Activated naive CD4-positive, alpha-beta T cell treated with anti-CD3 and anti-CD28 coated beads, Interleukin-2, amount 10 ng/mL, durations not matched to agents 7 days and 5 days (primary cell): ENCODE measurements at regions of chr4 and their contacts with region 1.

Region 1: GRCh38 chr4:39134683-39135319 is 47.5 kb upstream of the WDR19 start:
- DNase-seq: no peak
- H3K4me3 Mint-ChIP-seq: no peak overlapping the region
- H3K27ac Mint-ChIP-seq: no peak overlapping the region
- H3K4me1 Mint-ChIP-seq: peaks cover 16% of the 10 kb centered on the region
- H3K27me3 Mint-ChIP-seq: no peaks in the 10 kb centered on the region

Region 2: GRCh38 chr4:38894340-38894982 is 240.3 kb before region 1 on chr4:
- CTCF ChIA-PET with region 1: interaction called, 122 read pairs
- DNase-seq: no peak
- H3K4me3 Mint-ChIP-seq: no peak overlapping the region
- H3K27ac Mint-ChIP-seq: no peak overlapping the region
- H3K4me1 Mint-ChIP-seq: peaks cover 8% of the 10 kb centered on the region
- H3K27me3 Mint-ChIP-seq: peaks cover 7% of the 10 kb centered on the region

Region 3: DNA sequence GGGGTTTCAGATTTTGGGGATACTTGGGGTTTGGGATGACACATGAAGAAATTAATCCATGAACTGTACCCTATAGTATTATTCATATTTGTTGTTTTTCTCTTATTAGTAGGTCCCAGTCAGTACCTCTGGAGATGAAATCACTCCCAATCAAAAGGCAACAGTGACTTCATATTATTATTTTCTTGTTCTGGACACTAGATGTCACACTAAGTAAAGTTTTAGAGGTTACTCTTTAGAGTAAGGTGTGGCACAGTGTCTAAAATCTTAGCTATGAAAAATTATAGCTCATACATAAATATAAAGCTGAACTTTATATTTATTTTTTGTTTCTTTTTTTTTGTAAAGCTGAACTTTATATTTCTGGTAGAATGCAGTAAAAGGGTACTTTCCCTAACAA is 232.1 kb before region 1 on chr4:
- CTCF ChIA-PET with region 1: interaction called, 122 read pairs
- DNase-seq: no peak
- H3K4me3 Mint-ChIP-seq: no peak overlapping the region
- H3K27ac Mint-ChIP-seq: no peak overlapping the region
- H3K4me1 Mint-ChIP-seq: peaks cover 2% of the 10 kb centered on the region
- H3K27me3 Mint-ChIP-seq: peaks cover 15% of the 10 kb centered on the region

Region 4: DNA sequence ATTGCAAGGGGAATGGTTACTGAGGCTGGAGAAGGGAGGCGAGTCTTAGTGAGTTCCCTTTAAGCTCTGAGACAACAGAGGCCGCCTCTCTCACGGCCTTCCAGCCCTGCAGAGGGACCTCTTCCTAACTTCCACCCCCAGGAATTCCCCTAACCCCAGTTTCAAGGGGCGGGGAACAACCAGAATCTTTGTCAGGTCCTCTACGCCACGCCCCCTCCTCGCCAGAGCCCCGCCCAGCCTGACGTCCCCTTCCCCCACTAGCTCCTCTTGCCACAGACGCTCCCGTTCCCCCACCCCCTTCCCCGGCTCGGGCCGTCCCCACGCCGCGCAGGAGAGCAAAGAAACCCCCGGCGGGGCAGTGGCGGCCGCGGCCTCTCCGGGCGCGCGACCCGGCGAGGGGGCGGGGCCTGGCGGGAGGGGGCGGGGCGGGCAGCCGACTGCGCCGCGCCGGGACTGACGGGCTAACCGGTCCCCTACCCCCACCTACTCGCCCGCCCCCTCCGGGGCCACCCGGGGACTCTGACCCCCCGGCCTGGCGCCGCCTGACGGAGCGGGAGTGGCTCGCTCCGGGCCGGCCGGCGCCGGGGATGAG is 90.3 kb before region 1 on chr4:
- CTCF ChIA-PET with region 1: interaction called, 11 read pairs
- DNase-seq: peak; percentile 98
- H3K4me3 Mint-ChIP-seq: peak overlapping the region; percentile 86
- H3K27ac Mint-ChIP-seq: peak overlapping the region; percentile 91
- H3K4me1 Mint-ChIP-seq: peaks cover 56% of the 10 kb centered on the region
- H3K27me3 Mint-ChIP-seq: no peaks in the 10 kb centered on the region

Region 5: GRCh38 chr4:39103291-39103690 is 31.5 kb before region 1 on chr4:
- CTCF ChIA-PET with region 1: interaction called, 10 read pairs
- DNase-seq: no peak
- H3K4me3 Mint-ChIP-seq: no peak overlapping the region
- H3K27ac Mint-ChIP-seq: no peak overlapping the region
- H3K4me1 Mint-ChIP-seq: no peaks in the 10 kb centered on the region
- H3K27me3 Mint-ChIP-seq: no peaks in the 10 kb centered on the region

Region 6: DNA sequence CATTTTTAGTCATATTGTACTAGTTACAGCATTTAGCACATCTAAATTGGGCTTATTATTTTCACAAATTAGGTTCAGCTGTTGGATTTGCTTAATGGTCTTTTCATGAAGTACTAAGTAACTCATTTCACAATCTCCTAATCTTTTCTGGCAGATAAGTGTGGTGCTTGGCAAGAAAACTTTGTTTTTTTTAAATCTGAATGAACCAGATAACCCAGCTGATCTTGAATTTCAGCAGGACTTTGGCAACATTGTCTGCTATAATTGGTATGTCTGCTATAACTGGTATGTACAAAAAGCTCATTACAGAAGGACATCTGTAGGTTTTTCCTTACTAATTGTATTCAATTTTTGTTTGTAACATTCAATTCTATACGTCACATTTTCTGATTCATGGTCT is 70.2 kb after region 1 on chr4:
- CTCF ChIA-PET with region 1: no interaction called
- DNase-seq: no peak
- H3K4me3 Mint-ChIP-seq: no peak overlapping the region
- H3K27ac Mint-ChIP-seq: no peak overlapping the region
- H3K4me1 Mint-ChIP-seq: peaks cover 3% of the 10 kb centered on the region
- H3K27me3 Mint-ChIP-seq: no peaks in the 10 kb centered on the region